GM10248 (cell line): ENCODE measurements at regions of chr3 and their contacts with region 1.

Region 1: DNA sequence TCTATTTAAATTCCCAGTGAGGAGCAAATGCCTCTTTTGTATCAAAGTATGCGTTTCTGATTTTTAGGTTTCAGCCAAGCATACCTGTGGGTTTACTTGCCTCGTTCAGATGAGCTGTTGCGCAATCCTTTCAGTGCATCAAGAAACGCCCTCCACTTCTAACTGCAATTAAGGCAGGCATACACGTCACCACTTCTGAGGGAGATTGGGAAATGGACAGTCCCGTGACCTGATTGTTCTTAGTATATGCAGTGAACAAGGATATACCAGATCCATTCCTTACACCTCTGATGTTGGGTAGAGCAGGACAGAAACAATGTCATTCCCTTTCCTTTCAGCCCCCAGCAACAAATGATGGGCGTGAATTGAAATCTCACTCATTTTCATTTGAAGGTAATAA is 219.0 kb downstream of the ITPR1 start:
- DNase-seq: no peak
- CTCF ChIP-seq: no peak

Region 2: GRCh38 chr3:4693620-4694019 is 18.5 kb before region 1 on chr3:
- CTCF ChIA-PET with region 1: interaction called, 31 read pairs
- POLR2A ChIA-PET with region 1: no interaction called
- DNase-seq: peak; percentile 68
- CTCF ChIP-seq: no peak

Region 3: DNA sequence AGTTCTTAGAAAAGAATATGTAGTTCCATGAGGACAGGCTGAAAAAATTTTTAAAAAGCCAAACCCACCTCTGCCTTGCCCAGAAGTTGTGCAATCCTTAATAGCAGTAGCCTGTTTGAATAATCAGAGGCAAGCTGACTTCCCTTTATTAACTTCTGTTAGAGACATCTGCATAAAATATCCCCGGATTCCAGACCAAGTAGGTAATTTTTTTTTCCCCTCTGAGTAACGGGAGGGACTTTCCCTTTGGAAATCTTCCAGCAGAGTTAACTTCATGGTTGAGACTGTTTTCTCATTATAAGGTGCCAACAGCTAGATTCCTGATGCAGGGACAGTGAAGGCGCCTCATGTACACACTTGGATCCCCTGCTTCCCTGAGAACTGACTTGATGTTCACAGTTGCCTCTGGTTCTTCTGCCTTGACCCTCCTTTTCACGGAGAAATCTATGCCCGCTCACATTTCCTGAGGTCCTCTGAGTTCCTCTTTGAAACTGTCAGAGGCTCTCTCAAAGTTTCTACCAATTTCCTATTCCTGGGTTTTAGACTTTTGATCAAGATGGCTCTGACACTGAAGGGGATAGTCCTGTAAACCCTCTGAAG is 39.5 kb after region 1 on chr3:
- CTCF ChIA-PET with region 1: interaction called, 23 read pairs
- POLR2A ChIA-PET with region 1: interaction called, 8 read pairs
- DNase-seq: peak; percentile 49
- CTCF ChIP-seq: no peak

Region 4: GRCh38 chr3:4826237-4827100 is 114.3 kb after region 1 on chr3:
- CTCF ChIA-PET with region 1: interaction called, 24 read pairs
- POLR2A ChIA-PET with region 1: no interaction called
- DNase-seq: no peak
- CTCF ChIP-seq: no peak

Region 5: GRCh38 chr3:4986782-4987537 is 274.8 kb after region 1 on chr3:
- CTCF ChIA-PET with region 1: interaction called, 52 read pairs
- POLR2A ChIA-PET with region 1: interaction called, 4 read pairs
- DNase-seq: peak; percentile 80
- CTCF ChIP-seq: no peak

Region 6: GRCh38 chr3:5026331-5027218 is 314.4 kb after region 1 on chr3:
- CTCF ChIA-PET with region 1: interaction called, 20 read pairs
- POLR2A ChIA-PET with region 1: no interaction called
- DNase-seq: peak; percentile 72
- CTCF ChIP-seq: peak; percentile 72

Region 7: DNA sequence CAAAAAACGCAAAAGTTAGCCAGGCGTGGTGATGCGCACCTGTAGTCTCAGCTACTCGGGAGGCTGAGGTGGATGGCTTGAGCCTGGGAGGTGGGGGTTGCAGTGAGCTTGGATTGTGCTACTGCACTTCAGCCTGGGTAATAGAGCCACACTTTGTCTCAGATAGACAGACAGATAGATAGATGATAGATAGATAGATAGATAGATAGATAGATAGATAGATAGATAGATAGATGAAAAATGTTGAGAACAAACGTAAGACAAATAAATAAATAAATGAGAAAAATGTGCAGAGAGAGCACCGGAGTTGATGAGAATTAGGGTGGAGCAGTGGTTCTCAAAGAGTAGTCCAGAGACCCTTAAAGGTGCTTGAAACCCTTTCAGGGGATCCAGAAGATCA is 351.6 kb after region 1 on chr3:
- CTCF ChIA-PET with region 1: interaction called, 180 read pairs
- POLR2A ChIA-PET with region 1: no interaction called
- DNase-seq: no peak
- CTCF ChIP-seq: no peak

Region 8: GRCh38 chr3:5110337-5110736 is 398.2 kb after region 1 on chr3:
- CTCF ChIA-PET with region 1: no interaction called
- POLR2A ChIA-PET with region 1: no interaction called
- DNase-seq: no peak
- CTCF ChIP-seq: no peak